PC-9 (cell line): ENCODE measurements at regions of chr17 and their contacts with region 1.

Region 1: DNA sequence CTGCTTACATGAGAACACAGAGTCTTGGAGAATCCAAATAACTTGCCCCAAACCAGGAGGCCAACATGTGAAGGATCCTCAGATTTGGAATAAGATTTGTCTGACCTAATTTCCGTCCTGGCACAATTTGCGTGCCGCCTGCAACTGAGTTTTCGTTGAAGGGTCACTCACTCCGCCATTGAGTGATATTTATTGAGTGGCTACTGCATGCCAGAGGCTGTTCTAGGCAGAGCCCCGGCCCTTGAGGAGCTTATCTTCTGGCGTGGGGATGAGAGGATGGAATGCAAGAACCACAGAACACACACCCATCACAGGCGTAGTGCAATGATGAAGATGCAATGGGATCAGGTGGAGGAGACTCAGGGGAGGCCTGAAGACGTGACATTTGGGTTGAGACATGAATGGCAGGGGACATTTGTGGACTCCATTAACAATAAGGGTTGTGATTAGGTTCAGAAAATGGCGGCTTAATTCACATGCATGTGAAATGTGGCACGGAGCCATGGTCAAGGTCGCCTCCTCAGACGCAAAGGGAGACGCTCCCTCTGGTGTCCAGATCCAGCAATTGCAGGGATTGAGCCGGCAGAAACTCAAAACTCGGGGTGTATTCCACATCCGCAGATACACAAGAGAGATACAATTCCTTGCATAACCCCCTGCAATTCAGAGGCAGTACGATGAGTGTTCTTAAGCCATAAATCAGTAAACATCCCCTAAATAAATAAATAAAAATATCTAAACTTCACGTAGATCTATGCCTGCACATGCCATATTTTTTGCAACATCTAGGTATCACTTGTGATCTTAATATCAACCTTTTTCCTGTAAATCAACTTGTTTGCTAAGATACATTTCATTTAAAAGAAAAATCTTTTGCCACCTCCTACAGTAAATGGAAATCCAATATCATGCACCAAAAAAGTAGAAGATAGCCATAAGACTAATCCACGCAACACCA is 57.9 kb upstream of the CACNG4 start:
- DNase-seq: peak; percentile 56 to 65
- H3K4me3 ChIP-seq: no peak overlapping the region
- H3K27ac ChIP-seq: no peak overlapping the region
- H3K4me1 ChIP-seq: no peaks in the 10 kb centered on the region
- H3K27me3 ChIP-seq: no peaks in the 10 kb centered on the region
- CTCF ChIP-seq: peak; percentile 97

Region 2: DNA sequence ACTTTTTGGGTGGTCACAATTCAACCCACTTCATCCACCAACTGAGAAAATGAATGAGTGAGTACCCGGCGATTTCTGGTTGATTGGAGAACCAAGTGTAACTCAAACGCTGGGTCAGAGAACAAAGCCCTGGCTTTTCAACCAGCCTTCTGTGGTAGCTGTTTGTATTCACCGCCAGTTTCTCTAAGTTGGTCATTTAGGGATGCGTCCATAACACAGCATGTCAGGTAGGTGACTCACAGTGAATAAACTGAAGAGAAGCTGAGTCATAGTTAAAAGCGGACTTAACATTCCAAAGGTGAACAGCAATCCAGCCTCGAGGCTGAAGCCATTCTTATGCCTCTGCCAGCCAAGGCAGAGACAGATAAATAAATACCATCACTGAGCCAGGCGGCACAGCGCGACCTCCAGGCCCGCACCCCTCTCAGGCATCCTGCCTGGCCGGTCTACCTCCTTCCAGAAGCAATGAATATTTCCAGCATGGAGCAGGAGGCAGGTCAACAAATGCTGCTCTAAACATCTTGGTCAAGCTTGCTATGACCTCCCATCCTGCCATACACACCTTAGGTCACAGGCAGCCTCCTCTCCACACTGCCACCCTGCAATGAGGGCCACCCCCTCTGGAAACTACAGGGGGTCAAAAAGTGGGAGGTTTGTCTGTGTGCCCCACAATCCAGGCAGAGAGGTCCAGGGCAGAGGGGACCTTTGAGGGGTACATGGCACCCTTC is 45.5 kb after region 1 on chr17:
- CTCF ChIA-PET with region 1: no interaction called
- POLR2A ChIA-PET with region 1: no interaction called
- intact Hi-C with region 1: loop called (anchors 2 kb)
- DNase-seq: peak; percentile 96 to 100
- H3K4me3 ChIP-seq: peak overlapping the region; percentile 40; the same call in 1 of the 2 replicates
- H3K27ac ChIP-seq: peak overlapping the region; percentile 99
- H3K4me1 ChIP-seq: peaks cover 71% of the 10 kb centered on the region
- H3K27me3 ChIP-seq: no peaks in the 10 kb centered on the region
- CTCF ChIP-seq: no peak

Region 3: GRCh38 chr17:67183531-67183930 is 276.9 kb after region 1 on chr17:
- CTCF ChIA-PET with region 1: no interaction called
- POLR2A ChIA-PET with region 1: no interaction called
- intact Hi-C with region 1: no loop called
- DNase-seq: no peak
- H3K4me3 ChIP-seq: no peak overlapping the region
- H3K27ac ChIP-seq: no peak overlapping the region
- H3K4me1 ChIP-seq: no peaks in the 10 kb centered on the region
- H3K27me3 ChIP-seq: no peaks in the 10 kb centered on the region
- CTCF ChIP-seq: no peak